ENCODE measurements at regions of chr15 and their contacts with region 1.

Region 1: GRCh38 chr15:74635228-74635627 is 19.6 kb downstream of the CLK3 start:
- ATAC-seq: peak; percentile 36 to 78 (median 58)
- H3K4me3 ChIP-seq: no peak overlapping the region
- H3K27ac ChIP-seq: no peak overlapping the region
- H3K4me1 ChIP-seq: peaks cover 0 to 6% of the 10 kb centered on the region in 2 donors

Region 2: DNA sequence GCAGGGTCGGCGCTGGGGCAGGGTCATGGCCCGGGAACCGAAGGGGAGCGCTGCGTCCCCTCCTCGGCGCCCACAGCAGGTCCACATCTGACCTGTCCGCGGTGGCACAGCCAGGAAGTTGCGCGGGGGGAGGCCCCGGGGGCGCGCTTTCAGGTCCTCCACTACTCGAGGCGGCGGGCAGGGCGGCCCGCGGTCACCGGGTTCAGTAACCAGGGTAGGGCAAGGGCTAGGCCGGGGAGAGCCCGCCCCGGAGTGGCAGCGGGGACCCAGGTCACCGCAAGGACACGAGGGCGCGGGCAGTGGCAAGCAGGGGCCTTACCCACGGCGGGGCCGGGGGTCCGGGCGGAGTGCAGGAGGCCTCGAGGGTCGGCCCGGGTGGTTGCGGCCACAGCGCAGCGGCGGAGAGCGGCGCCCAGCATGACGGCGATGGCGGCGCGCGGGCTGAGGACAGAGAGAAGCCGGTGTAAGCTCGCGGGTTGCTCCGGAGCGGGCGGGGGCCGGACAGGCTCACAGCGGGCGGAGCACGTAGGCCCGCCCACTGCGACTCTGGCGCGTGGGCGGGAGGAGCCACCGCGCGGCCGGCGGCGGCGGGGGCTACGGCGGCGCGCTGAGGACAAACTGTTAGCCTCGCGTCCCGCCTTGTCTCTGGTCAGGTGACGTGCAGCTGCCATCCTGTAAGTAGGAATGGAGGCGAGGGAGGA is 302.5 kb after region 1 on chr15 and contains the start of gene COX5A:
- in situ Hi-C with region 1: loop called in 2 of 9 experiments (anchors 25 kb)
- ATAC-seq: peak; percentile 96 to 98 (median 97)
- H3K4me3 ChIP-seq: peak within 1 kb of the TSS; percentile 58 to 93 (median 83)
- H3K27ac ChIP-seq: peak within 1 kb of the TSS; percentile 87 to 91
- H3K4me1 ChIP-seq: peaks cover 13 to 16% of the 10 kb centered on the region in 2 donors
- total RNA-seq, gene COX5A: 108 to 262 (median 203) TPM

Region 3: GRCh38 chr15:74956648-74957300 is 321.5 kb after region 1 on chr15 and contains the start of gene RPP25:
- in situ Hi-C with region 1: loop called in 1 of 9 experiments (anchors 25 kb)
- ATAC-seq: peak; percentile 76 to 83 (median 78)
- H3K4me3 ChIP-seq: peak within 1 kb of the TSS; percentile 36 to 58 (median 39)
- H3K27ac ChIP-seq: peak within 1 kb of the TSS; percentile 51 to 81
- H3K4me1 ChIP-seq: peaks cover 22 to 41% of the 10 kb centered on the region in 2 donors
- total RNA-seq, gene RPP25: 3.2 to 13.9 (median 9.5) TPM

Region 4: DNA sequence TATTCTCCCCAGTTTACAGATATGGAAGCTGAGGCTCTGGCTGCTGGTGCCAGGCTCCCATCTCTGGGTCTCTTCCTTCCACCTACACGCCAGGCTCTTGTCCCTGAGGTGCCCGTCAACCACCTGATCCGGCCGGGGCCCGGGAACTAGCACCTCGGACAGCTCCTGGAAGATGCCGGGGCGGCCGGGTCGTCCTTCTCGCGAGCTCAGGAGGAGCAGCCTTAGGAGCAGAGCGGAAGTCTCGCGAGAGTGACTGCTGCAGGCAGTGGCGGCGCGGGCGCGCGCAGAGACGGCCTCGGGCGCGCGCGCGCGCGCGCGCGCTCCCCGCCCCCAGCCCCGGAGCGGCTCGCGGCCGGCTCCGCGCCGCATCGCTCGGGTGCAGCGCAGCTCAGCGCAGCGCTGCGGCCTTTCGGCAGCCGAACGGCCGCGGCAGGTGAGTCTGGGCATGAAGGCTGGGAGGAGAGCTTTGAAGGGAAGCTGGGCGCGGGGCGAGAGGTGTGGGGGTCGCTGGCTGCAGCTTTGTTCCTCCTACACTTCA is 360.1 kb after region 1 on chr15 and contains the start of gene SCAMP5:
- in situ Hi-C with region 1: no loop called
- ATAC-seq: peak; percentile 93 to 97 (median 95)
- H3K4me3 ChIP-seq: peak within 1 kb of the TSS; percentile 58 to 91 (median 74)
- H3K27ac ChIP-seq: peak within 1 kb of the TSS; percentile 90 to 93
- H3K4me1 ChIP-seq: peaks cover 4 to 23% of the 10 kb centered on the region in 2 donors
- total RNA-seq, gene SCAMP5: 3.6 to 62.7 (median 51.5) TPM